ENCODE measurements at regions of chrX and their contacts with region 1.

Region 1: GRCh38 chrX:13487731-13488523 is 81.5 kb upstream of the EGFL6 start:
- DNase-seq: peak; percentile 18 to 77
- ATAC-seq: peak; percentile 36 to 59 (median 52)
- H3K4me3 ChIP-seq: no peak overlapping the region
- H3K4me3 Mint-ChIP-seq: peak overlapping the region; percentile 31
- H3K27ac ChIP-seq: peak overlapping the region; percentile 76
- H3K27ac Mint-ChIP-seq: peak overlapping the region; percentile 77 to 81
- H3K4me1 ChIP-seq: peaks cover 45% of the 10 kb centered on the region
- H3K4me1 Mint-ChIP-seq: peaks cover 42 to 48% of the 10 kb centered on the region in 2 donors
- H3K27me3 ChIP-seq: no peaks in the 10 kb centered on the region
- H3K27me3 Mint-ChIP-seq: peaks cover 0 to 16% of the 10 kb centered on the region in 2 donors
- CTCF ChIP-seq: peak; percentile 58

Region 2: DNA sequence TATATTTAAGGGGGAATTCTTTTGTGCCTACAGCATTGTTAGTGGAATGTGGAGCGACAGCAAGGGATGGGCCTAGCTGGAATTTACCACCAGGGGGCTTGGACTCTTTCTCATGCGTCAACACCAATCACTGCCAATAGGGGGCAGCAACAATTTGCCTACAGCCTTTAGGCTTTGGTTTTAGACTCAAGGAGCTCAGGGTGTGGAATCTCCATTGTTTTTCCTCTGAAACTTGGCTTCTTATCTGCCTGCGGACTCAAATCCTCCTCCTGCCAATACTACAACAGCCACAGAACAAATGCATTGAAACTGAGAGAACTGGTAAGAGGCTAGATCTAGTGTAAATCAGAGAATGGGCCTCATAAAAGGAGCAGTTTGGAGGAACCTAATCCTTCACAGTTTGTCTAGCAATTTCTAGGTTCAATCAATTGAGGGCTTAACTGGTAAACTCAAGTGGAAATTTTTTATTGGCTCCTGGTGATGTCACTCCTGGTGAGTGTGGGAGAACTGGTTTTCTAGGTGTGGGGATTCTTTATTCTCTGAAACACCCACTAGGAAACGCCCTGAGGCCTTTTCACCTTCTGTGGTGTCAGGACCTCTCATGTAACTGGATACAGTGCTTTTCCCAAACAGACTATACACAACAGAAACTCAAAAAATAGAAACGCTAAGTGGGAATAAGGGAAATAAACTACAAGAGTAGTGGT is 540.9 kb before region 1 on chrX:
- intact Hi-C with region 1: loop called (anchors 1 kb)
- DNase-seq: peak; percentile 60 to 88
- ATAC-seq: peak; percentile 54 to 72 (median 62)
- H3K4me3 ChIP-seq: no peak overlapping the region
- H3K4me3 Mint-ChIP-seq: peak overlapping the region; percentile 55
- H3K27ac ChIP-seq: peak overlapping the region; percentile 93
- H3K27ac Mint-ChIP-seq: peak overlapping the region; percentile 95 to 97
- H3K4me1 ChIP-seq: peaks cover 53% of the 10 kb centered on the region
- H3K4me1 Mint-ChIP-seq: peaks cover 32 to 52% of the 10 kb centered on the region in 2 donors
- H3K27me3 ChIP-seq: no peaks in the 10 kb centered on the region
- H3K27me3 Mint-ChIP-seq: peaks cover 0 to 3% of the 10 kb centered on the region in 2 donors
- CTCF ChIP-seq: peak; percentile 91

Region 3: DNA sequence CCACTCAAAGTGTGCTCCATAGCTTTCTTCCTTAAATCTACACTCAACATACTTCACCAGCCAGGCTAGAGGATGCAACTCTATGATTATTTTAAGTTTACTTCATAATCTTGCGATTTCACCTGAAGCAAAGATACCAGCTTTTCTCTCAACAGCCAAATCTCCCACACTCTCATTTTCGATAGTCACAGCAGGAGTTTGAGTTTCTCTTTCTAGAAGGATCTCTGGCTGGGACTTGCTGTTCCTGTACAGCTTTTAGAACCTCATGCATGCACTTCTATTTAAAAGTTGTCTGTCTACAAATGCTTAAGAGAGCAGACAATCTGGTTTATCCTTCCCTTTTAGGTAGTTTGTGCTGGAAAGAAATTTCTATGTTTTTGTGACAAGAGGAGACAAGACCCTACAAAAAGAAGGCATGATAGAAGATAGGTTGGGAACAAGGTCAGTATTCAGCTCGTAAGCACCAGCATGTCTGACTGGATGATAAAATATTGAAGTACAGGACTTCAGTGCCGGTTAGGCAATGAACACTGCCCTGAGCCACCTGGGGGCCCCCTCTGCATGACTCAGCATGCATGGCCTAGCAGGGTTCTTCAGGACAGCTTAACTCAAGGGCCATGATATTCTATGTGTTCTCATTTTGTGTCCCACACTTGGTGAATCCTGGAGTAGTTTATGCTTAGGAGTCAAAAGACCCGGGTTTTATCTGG is 233.7 kb before region 1 on chrX:
- intact Hi-C with region 1: loop called (anchors 10 kb)
- DNase-seq: peak in 1 of 2 donors; percentile 2
- ATAC-seq: peak; percentile 39 to 59 (median 55)
- H3K4me3 ChIP-seq: no peak overlapping the region
- H3K4me3 Mint-ChIP-seq: no peak overlapping the region
- H3K27ac ChIP-seq: no peak overlapping the region
- H3K27ac Mint-ChIP-seq: peak overlapping the region in 1 of 2 donors; percentile 26
- H3K4me1 ChIP-seq: peaks cover 11% of the 10 kb centered on the region
- H3K4me1 Mint-ChIP-seq: peaks cover 26 to 29% of the 10 kb centered on the region in 2 donors
- H3K27me3 ChIP-seq: no peaks in the 10 kb centered on the region
- H3K27me3 Mint-ChIP-seq: peaks cover 0 to 14% of the 10 kb centered on the region in 2 donors
- CTCF ChIP-seq: no peak

Region 4: DNA sequence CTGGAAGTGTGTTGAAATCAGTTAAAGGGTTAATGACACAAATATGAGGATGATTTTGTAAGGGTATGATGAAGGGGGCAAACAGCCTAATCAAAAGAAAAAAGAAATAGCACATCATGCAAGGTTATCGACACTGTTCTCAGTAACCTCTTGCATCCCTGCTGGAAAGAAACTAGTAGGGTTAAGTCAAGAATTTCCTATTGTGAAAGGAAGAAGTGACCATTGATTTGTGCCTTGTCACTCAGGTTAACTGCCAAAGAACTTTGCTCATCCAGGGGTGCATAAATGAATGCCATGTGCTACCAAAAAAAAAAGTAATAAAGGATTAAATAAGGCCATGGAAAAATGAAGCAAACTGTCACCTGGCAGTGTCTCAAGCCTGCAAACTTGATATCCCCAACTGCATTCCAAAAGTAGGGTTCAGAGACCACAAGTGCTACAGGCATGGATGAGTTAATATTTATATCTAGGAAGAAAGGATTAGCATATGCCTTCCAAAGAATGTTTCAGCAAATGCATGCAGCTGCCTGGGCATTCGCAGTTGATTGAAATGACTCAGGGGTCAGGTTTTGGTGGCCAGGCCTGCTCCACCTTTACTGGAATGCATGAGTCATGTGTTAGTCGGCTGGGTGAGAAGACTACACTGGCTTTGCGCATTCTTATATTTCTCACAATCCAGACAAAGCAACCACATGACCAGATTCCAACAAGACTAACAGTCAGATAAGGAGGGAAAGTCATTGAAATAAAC is 89.7 kb before region 1 on chrX:
- intact Hi-C with region 1: loop called (anchors 10 kb)
- DNase-seq: no peak
- ATAC-seq: peak in 2 of 3 donors; percentile 56 to 82
- H3K4me3 ChIP-seq: no peak overlapping the region
- H3K4me3 Mint-ChIP-seq: no peak overlapping the region
- H3K27ac ChIP-seq: no peak overlapping the region
- H3K27ac Mint-ChIP-seq: no peak overlapping the region
- H3K4me1 ChIP-seq: no peaks in the 10 kb centered on the region
- H3K4me1 Mint-ChIP-seq: peaks cover 0 to 14% of the 10 kb centered on the region in 2 donors
- H3K27me3 ChIP-seq: no peaks in the 10 kb centered on the region
- H3K27me3 Mint-ChIP-seq: peaks cover 0 to 19% of the 10 kb centered on the region in 2 donors
- CTCF ChIP-seq: no peak

Measured in natural killer cell (primary cell).